ENCODE measurements at regions of chrX and their contacts with region 1.

Region 1: GRCh38 chrX:63441717-63442116 is 90.6 kb upstream of the SPIN4 start:
- DNase-seq: no peak
- ATAC-seq: no peak
- H3K4me3 ChIP-seq: no peak overlapping the region
- H3K27ac ChIP-seq: no peak overlapping the region
- H3K4me1 ChIP-seq: no peaks in the 10 kb centered on the region
- H3K27me3 ChIP-seq: no peaks in the 10 kb centered on the region
- CTCF ChIP-seq: no peak
- EP300 ChIP-seq: no peak
- POLR2A ChIP-seq: no peak
- RAD21 ChIP-seq: no peak

Region 2: DNA sequence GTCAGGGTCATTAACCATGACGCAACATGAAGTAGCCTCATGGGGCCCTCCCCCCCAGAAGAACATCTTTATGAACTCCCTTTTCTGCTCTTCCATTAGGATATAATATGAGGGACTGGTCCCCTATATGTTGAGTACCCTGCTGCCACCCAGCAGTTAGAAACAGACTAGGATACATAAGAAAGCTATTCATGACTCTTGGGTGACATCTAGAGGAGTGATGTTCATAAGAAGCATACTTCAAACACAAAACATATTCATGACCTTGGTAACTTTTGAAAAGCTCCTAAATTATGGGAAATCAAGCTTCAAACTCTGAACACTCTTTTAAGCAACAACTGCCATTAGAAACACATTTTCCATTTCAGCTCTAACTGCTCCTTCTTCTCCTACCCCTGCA is 64.6 kb after region 1 on chrX:
- CTCF ChIA-PET with region 1: no interaction called
- POLR2A ChIA-PET with region 1: no interaction called
- RAD21 ChIA-PET with region 1: no interaction called
- SMC1A ChIA-PET with region 1: no interaction called
- in situ Hi-C with region 1: no loop called
- intact Hi-C with region 1: loop called (anchors 10 kb)
- DNase-seq: no peak
- ATAC-seq: peak; percentile 65
- H3K4me3 ChIP-seq: no peak overlapping the region
- H3K27ac ChIP-seq: no peak overlapping the region
- H3K4me1 ChIP-seq: no peaks in the 10 kb centered on the region
- H3K27me3 ChIP-seq: no peaks in the 10 kb centered on the region
- CTCF ChIP-seq: peak in 2 of 3 experiments; percentile 29 to 39; a peak in 3 of 6 replicates
- EP300 ChIP-seq: no peak
- POLR2A ChIP-seq: no peak
- RAD21 ChIP-seq: peak; percentile 52

Region 3: GRCh38 chrX:63551856-63552255 is 110.1 kb after region 1 on chrX:
- CTCF ChIA-PET with region 1: no interaction called
- POLR2A ChIA-PET with region 1: no interaction called
- RAD21 ChIA-PET with region 1: no interaction called
- SMC1A ChIA-PET with region 1: no interaction called
- in situ Hi-C with region 1: no loop called
- intact Hi-C with region 1: no loop called
- DNase-seq: no peak
- ATAC-seq: no peak
- H3K4me3 ChIP-seq: no peak overlapping the region
- H3K27ac ChIP-seq: no peak overlapping the region
- H3K4me1 ChIP-seq: no peaks in the 10 kb centered on the region
- H3K27me3 ChIP-seq: no peaks in the 10 kb centered on the region
- CTCF ChIP-seq: no peak
- EP300 ChIP-seq: no peak
- POLR2A ChIP-seq: no peak
- RAD21 ChIP-seq: no peak

Region 4: GRCh38 chrX:63566856-63567255 is 125.1 kb after region 1 on chrX:
- CTCF ChIA-PET with region 1: no interaction called
- POLR2A ChIA-PET with region 1: no interaction called
- RAD21 ChIA-PET with region 1: no interaction called
- SMC1A ChIA-PET with region 1: no interaction called
- in situ Hi-C with region 1: no loop called
- intact Hi-C with region 1: no loop called
- DNase-seq: no peak
- ATAC-seq: no peak
- H3K4me3 ChIP-seq: no peak overlapping the region
- H3K27ac ChIP-seq: no peak overlapping the region
- H3K4me1 ChIP-seq: no peaks in the 10 kb centered on the region
- H3K27me3 ChIP-seq: no peaks in the 10 kb centered on the region
- CTCF ChIP-seq: no peak
- EP300 ChIP-seq: no peak
- POLR2A ChIP-seq: no peak
- RAD21 ChIP-seq: no peak

Region 5: GRCh38 chrX:63686878-63687714 is 245.4 kb after region 1 on chrX:
- CTCF ChIA-PET with region 1: no interaction called
- POLR2A ChIA-PET with region 1: no interaction called
- RAD21 ChIA-PET with region 1: no interaction called
- SMC1A ChIA-PET with region 1: no interaction called
- in situ Hi-C with region 1: no loop called
- intact Hi-C with region 1: loop called (anchors 10 kb)
- DNase-seq: peak; percentile 20
- ATAC-seq: peak; percentile 92
- H3K4me3 ChIP-seq: no peak overlapping the region
- H3K27ac ChIP-seq: no peak overlapping the region
- H3K4me1 ChIP-seq: no peaks in the 10 kb centered on the region
- H3K27me3 ChIP-seq: no peaks in the 10 kb centered on the region
- CTCF ChIP-seq: peak; percentile 58 to 72 (median 69)
- EP300 ChIP-seq: no peak
- POLR2A ChIP-seq: no peak
- RAD21 ChIP-seq: peak; percentile 72